SK-N-SH (cell line): ENCODE measurements at regions of chr12 and their contacts with region 1.

Region 1: DNA sequence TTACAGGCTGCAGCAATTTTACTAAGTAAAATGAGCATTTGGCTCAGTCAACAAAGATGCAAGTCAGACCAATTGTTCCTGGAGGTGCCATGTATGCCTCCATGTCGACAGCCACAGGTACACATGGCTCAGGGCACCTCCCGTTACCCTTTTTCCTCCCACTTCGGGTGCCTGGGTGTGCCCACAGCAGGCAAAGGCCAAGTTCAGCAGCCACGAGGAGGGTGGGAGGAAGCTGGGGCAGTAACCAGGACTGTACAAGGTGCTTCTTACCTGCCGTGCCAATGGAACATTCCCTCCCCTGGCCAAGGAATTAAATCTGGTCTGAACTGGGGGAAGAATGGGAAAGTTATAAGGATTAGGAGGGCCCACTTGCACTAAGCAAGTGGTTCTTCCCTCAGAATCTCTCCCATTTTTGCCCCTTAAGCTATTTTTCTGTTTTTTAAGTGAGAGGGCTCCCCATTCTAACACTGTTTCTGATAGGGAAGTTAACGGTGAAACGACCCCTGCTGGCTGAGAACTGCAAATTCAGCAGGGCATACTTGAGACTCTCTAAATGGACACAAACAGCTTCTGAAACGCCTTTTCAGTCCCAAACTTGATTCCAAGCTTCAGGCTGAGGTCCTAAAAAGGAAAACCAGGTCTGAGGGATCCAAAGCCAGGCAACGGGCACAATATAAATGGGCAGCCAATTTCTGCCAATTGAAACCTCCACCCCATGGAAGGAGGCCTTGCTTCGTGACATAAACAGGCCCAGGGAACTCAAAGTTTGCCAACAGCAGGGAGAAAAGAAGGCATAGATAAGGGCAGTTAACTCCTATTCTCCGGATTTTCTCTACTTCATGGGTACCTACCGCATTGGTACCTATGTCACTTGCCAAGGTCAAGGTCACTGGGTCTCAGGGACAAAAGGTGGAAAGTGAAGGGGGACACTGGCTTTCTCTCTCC is 24.8 kb downstream of the CLECL1 start:
- DNase-seq: peak; percentile 31
- H3K4me3 ChIP-seq: no peak overlapping the region
- H3K27ac ChIP-seq: no peak overlapping the region
- H3K4me1 ChIP-seq: no peaks in the 10 kb centered on the region
- H3K27me3 ChIP-seq: no peaks in the 10 kb centered on the region; the same call in 1 of the 2 replicates
- CTCF ChIP-seq: peak; percentile 88
- EP300 ChIP-seq: no peak
- RAD21 ChIP-seq: peak; percentile 71

Region 2: GRCh38 chr12:9331218-9331626 is 376.9 kb before region 1 on chr12:
- CTCF ChIA-PET with region 1: interaction called, 44 read pairs
- POLR2A ChIA-PET with region 1: no interaction called
- DNase-seq: peak; percentile 72
- H3K4me3 ChIP-seq: peak overlapping the region in 1 of 2 experiments; percentile 50; a peak in 1 of 4 replicates
- H3K27ac ChIP-seq: no peak overlapping the region
- H3K4me1 ChIP-seq: no peaks in the 10 kb centered on the region; a peak in 1 of 4 replicates
- H3K27me3 ChIP-seq: no peaks in the 10 kb centered on the region; the same call in 1 of the 2 replicates
- CTCF ChIP-seq: peak; percentile 93
- EP300 ChIP-seq: no peak
- RAD21 ChIP-seq: peak; percentile 92

Region 3: GRCh38 chr12:9378430-9378835 is 329.7 kb before region 1 on chr12:
- CTCF ChIA-PET with region 1: interaction called, 12 read pairs
- POLR2A ChIA-PET with region 1: no interaction called
- DNase-seq: peak; percentile 47
- H3K4me3 ChIP-seq: no peak overlapping the region
- H3K27ac ChIP-seq: no peak overlapping the region
- H3K4me1 ChIP-seq: no peaks in the 10 kb centered on the region
- H3K27me3 ChIP-seq: no peaks in the 10 kb centered on the region; the same call in 1 of the 2 replicates
- CTCF ChIP-seq: peak; percentile 22; the same call in 1 of the 2 replicates
- EP300 ChIP-seq: no peak
- RAD21 ChIP-seq: peak; percentile 69

Region 4: DNA sequence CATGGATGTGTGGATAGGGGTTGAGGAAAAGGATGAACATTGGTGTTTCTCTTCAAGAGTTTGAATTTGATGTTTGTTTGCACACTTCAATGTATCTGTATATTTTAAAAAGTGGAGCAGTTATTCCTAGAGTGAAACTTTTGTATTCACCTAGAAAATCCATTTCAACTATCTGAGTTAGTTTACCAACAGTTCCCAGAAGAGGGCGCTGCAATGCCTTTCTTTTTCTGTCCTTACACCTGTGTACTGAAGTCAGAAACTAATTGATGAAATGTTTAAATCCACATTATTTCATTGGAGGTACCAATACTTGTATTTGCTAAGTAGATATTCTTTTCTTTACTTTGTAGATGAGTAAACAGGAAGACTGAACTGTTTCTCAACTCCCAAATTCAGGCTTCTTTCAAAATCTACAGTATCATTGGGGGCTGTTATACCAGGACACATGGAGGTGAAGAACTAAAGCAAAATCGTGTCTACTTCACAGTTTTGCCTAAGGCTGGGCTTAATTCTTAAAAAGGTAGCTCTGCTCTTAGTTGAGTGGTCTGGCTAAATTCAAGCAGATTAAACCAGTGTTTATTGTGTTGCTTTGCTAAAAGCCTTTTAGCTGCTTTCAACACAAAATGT is 73.8 kb before region 1 on chr12:
- CTCF ChIA-PET with region 1: interaction called, 32 read pairs
- POLR2A ChIA-PET with region 1: no interaction called
- DNase-seq: peak; percentile 35
- H3K4me3 ChIP-seq: no peak overlapping the region
- H3K27ac ChIP-seq: no peak overlapping the region
- H3K4me1 ChIP-seq: no peaks in the 10 kb centered on the region
- H3K27me3 ChIP-seq: no peaks in the 10 kb centered on the region; the same call in 1 of the 2 replicates
- CTCF ChIP-seq: peak; percentile 89
- EP300 ChIP-seq: no peak
- RAD21 ChIP-seq: peak; percentile 78

Region 5: DNA sequence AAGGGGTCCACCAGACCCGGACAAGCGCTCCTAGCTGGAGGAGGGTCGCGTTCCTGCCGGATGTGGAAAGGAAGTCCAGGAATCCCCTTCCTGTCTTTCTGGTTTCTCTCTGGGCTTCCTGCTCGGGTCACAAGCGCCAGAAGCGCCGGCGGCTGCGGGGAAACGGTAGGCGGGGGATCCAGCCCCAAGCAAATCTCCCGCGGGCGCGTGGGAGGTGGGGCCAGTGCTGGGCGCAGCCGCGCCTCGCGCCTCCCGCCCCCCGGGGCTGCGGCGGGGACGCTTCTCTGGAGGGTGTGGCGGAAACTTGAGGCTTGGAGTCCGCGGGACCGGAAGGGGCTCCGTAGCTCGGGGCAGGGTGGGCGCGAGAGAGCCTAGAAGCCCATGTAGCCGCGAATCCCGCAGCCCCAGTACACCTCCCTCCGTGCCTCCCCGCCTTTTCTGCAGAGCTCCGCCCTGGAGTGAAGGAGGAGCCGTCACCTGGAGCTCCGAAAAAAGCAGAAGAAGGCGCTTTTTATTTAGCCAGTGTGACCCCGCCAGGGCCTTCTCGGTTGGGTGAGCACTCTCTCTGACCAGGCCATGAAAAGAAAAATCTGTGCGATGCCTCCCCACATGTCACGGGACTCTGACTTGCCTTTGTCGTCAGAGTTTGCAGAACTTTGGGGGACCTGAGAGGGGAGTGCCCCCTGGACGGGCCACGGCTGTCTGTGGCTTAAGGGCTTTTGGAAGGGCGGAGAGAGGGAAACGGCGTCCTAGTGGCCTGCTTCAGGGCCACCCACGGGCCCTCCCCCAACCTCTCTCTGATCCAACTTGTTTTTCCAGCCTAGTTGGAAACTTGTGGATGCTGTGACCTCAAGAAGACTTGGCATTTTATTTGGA is 60.1 kb before region 1 on chr12:
- CTCF ChIA-PET with region 1: interaction called, 17 read pairs
- POLR2A ChIA-PET with region 1: no interaction called
- DNase-seq: peak; percentile 86
- H3K4me3 ChIP-seq: peak overlapping the region; percentile 81 to 88
- H3K27ac ChIP-seq: peak overlapping the region; percentile 46 to 68
- H3K4me1 ChIP-seq: peaks cover 0 to 9% of the 10 kb centered on the region in 2 experiments; a peak in 2 of 4 replicates
- H3K27me3 ChIP-seq: no peaks in the 10 kb centered on the region
- CTCF ChIP-seq: no peak
- EP300 ChIP-seq: no peak
- RAD21 ChIP-seq: no peak

Region 6: GRCh38 chr12:9721394-9722092 is 13.4 kb after region 1 on chr12:
- CTCF ChIA-PET with region 1: interaction called, 24 read pairs
- POLR2A ChIA-PET with region 1: no interaction called
- DNase-seq: no peak
- H3K4me3 ChIP-seq: no peak overlapping the region
- H3K27ac ChIP-seq: no peak overlapping the region
- H3K4me1 ChIP-seq: no peaks in the 10 kb centered on the region
- H3K27me3 ChIP-seq: peaks cover 13% of the 10 kb centered on the region; the same call in 1 of the 2 replicates
- CTCF ChIP-seq: no peak
- EP300 ChIP-seq: no peak
- RAD21 ChIP-seq: no peak

Region 7: DNA sequence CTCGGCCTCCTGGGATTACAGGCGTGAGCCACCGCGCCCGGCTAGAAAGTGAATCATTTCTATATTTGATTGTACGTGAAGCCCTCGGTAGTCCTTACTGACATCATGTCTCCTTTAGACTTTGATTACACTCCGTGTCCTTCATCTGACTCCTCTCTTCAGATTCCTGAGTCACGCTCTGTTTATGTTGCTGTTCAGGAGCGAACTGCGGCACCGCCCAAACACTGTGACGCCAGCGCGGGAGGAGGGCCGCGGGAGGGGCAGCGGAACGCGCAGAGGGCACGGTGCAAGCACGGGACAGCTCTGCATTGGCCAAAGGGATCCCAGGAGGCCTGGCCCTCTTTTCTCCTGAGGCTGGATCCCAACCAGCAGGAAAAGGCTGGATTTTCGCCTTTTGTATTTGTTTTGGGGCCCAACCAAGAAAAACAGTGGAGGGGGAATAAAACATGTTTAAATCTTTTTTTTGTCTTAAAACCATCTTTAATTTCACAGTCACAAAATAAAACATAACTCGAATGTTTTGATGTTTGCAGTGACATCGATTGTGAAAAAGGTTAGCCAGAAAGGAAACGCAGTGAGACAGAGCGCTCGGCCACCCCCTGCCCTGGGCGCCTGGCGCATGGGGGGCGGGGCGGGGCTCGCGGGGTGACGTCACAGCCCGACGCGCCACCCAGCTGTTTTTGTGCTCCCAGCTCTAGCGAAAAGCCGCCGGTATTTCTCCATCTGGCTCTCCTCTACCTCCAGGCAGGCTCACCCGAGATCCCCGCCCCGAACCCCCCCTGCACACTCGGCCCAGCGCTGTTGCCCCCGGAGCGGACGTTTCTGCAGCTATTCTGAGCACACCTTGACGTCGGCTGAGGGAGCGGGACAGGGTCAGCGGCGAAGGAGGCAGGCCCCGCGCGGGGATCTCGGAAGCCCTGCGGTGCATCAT is 504.3 kb after region 1 on chr12 and contains the start of gene GABARAPL1:
- CTCF ChIA-PET with region 1: no interaction called
- POLR2A ChIA-PET with region 1: no interaction called
- DNase-seq: peak; percentile 91
- H3K4me3 ChIP-seq: peak within 1 kb of the TSS; percentile 72 to 97
- H3K27ac ChIP-seq: peak within 1 kb of the TSS; percentile 79 to 87
- H3K4me1 ChIP-seq: no peaks in the 10 kb centered on the region; a peak in 1 of 4 replicates
- H3K27me3 ChIP-seq: peaks cover 9% of the 10 kb centered on the region; the same call in 1 of the 2 replicates
- CTCF ChIP-seq: no peak
- EP300 ChIP-seq: no peak
- RAD21 ChIP-seq: no peak
- polyA plus RNA-seq, gene GABARAPL1: 9.2 and 14.3 TPM in 2 replicates